Heart right ventricle (tissue), 16 donors: ENCODE measurements at regions of chr5 and their contacts with region 1.

Region 1: GRCh38 chr5:102681407-102681983 is 73.6 kb upstream of the PAM start:
- DNase-seq: peak; percentile 35 to 69
- ATAC-seq: peak in 7 of 8 donors; percentile 73 to 90 (median 78)
- H3K4me3 ChIP-seq: no peak overlapping the region
- H3K27ac ChIP-seq: no peak overlapping the region
- H3K4me1 ChIP-seq: no peaks in the 10 kb centered on the region
- H3K27me3 ChIP-seq: no peaks in the 10 kb centered on the region
- CTCF ChIP-seq: peak; percentile 46 to 89 (median 83)

Region 2: GRCh38 chr5:102628441-102629175 is 52.9 kb before region 1 on chr5:
- intact Hi-C with region 1: no loop called
- DNase-seq: peak in 1 of 2 donors; percentile 28
- ATAC-seq: peak; percentile 44 to 92 (median 80)
- H3K4me3 ChIP-seq: no peak overlapping the region
- H3K27ac ChIP-seq: peak overlapping the region in 7 of 10 donors; percentile 34 to 71 (median 62)
- H3K4me1 ChIP-seq: peaks cover 0 to 24% (median 7%) of the 10 kb centered on the region in 9 donors
- H3K27me3 ChIP-seq: no peaks in the 10 kb centered on the region
- CTCF ChIP-seq: no peak

Region 3: GRCh38 chr5:102971697-102972293 is 290.3 kb after region 1 on chr5:
- intact Hi-C with region 1: loop called in 3 of 10 experiments (anchors 5 to 10 kb)
- DNase-seq: no peak
- ATAC-seq: peak in 6 of 8 donors; percentile 42 to 74 (median 51)
- H3K4me3 ChIP-seq: no peak overlapping the region
- H3K27ac ChIP-seq: no peak overlapping the region
- H3K4me1 ChIP-seq: peaks cover 0 to 16% (median 10%) of the 10 kb centered on the region in 9 donors
- H3K27me3 ChIP-seq: no peaks in the 10 kb centered on the region
- CTCF ChIP-seq: peak in 7 of 9 donors; percentile 36 to 72 (median 50)

Region 4: GRCh38 chr5:103031607-103032006 is 350.1 kb after region 1 on chr5:
- intact Hi-C with region 1: loop called in 2 of 10 experiments (anchors 10 kb)
- DNase-seq: no peak
- ATAC-seq: no peak
- H3K4me3 ChIP-seq: no peak overlapping the region
- H3K27ac ChIP-seq: no peak overlapping the region
- H3K4me1 ChIP-seq: peaks cover 0 to 15% (median 0%) of the 10 kb centered on the region in 9 donors
- H3K27me3 ChIP-seq: no peaks in the 10 kb centered on the region
- CTCF ChIP-seq: peak in 6 of 9 donors; percentile 12 to 39 (median 22)

Region 5: GRCh38 chr5:103041071-103041676 is 359.7 kb after region 1 on chr5:
- intact Hi-C with region 1: loop called in 8 of 10 experiments (anchors 2 to 10 kb)
- DNase-seq: no peak
- ATAC-seq: no peak
- H3K4me3 ChIP-seq: no peak overlapping the region
- H3K27ac ChIP-seq: no peak overlapping the region
- H3K4me1 ChIP-seq: no peaks in the 10 kb centered on the region
- H3K27me3 ChIP-seq: no peaks in the 10 kb centered on the region
- CTCF ChIP-seq: peak; percentile 44 to 82 (median 63)

Region 6: DNA sequence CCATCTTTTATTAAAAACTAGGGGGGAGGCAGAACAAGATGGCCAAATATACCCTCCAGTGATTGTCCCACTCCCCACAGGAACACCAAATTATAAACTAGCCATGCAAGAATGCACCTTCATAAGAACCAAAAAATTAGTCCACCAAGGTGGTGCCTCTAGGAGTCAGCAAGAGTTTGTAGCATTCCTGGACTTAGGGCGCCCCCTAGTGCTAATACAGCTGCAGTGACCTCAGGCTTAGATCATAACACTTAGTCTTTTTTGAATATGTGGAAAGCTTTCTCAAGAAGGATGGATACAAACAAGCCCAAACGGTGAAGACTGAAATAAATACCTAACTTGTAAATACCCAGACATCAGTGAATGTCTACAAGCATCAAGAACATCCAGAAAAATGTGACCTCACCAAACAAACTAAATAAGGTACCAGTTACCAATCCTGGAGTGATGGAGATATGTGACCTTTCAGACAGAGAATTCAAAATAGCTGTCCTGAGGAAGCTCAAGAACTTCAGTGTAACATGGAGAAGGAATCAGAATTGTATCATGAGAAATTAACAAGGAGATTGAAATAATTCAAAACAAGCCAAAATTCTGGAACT is 457.9 kb after region 1 on chr5:
- intact Hi-C with region 1: loop called in 4 of 10 experiments (anchors 2 to 5 kb)
- DNase-seq: peak; percentile 49 to 76
- ATAC-seq: peak; percentile 71 to 91 (median 84)
- H3K4me3 ChIP-seq: no peak overlapping the region
- H3K27ac ChIP-seq: no peak overlapping the region
- H3K4me1 ChIP-seq: no peaks in the 10 kb centered on the region
- H3K27me3 ChIP-seq: no peaks in the 10 kb centered on the region
- CTCF ChIP-seq: peak; percentile 74 to 94 (median 91)